GM18951 (cell line): ENCODE measurements at regions of chr10 and their contacts with region 1.

Region 1: DNA sequence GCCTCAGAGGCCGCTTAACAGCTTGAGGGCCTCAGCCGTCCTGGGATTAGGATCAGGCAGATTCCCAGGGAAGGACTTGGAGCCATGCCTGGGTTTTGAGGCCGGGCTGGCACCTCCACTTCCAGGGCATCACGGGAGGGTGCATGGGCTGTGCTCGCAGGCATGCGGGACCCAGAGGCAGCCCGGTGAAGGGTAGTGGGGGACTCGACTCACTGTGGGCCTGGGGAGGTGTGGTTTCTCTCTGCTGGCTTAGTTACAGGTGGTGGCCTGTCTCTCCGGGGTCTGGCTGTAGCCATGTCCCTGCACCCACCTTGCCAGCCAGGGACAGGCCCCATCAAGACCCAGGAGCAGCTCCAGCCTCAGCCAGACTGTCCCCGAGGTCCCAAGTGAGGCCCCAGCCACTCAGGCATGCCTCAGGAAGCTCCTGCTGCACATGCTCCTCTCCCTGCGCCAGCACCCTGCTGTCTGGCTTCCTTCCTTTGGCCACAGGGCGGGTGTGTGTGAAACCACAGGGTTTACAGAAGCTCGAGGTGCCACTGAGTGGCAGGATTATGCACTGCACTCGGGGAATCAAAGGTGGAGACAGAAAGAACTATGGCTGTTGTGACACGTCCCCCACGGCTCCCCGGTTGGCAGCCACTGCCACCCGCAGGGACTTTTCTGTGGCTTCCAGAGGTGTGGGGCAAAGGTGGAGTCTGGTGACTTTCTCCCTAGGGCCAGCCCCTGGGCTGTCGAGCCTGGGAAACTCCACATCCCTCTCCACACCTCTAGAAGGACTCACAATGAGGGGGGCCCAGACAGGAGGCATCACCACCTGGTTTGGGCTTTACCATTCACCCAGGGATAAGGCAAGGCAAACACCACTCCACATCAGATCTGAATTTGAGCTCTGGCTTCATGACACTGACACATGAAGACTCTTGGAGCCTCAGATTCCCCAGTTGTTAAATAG is 19.7 kb downstream of the GOLGA7B start:
- POLR2A ChIP-seq: no peak

Region 2: GRCh38 chr10:97792141-97792721 is 77.1 kb before region 1 on chr10:
- in situ Hi-C with region 1: loop called (anchors 10 kb)
- POLR2A ChIP-seq: no peak

Region 3: GRCh38 chr10:98924526-98924925 is 1055.2 kb after region 1 on chr10:
- in situ Hi-C with region 1: no loop called
- POLR2A ChIP-seq: no peak